CD8-positive, alpha-beta T cell (primary cell): ENCODE measurements at regions of chr7 and their contacts with region 1.

Region 1: GRCh38 chr7:115868373-115868772 is 162.2 kb downstream of the TFEC start:
- DNase-seq: no peak
- ATAC-seq: no peak
- H3K4me3 ChIP-seq: no peak overlapping the region
- H3K4me3 Mint-ChIP-seq: no peak overlapping the region
- H3K27ac ChIP-seq: no peak overlapping the region
- H3K27ac Mint-ChIP-seq: no peak overlapping the region
- H3K4me1 ChIP-seq: no peaks in the 10 kb centered on the region
- H3K4me1 Mint-ChIP-seq: no peaks in the 10 kb centered on the region
- H3K27me3 ChIP-seq: no peaks in the 10 kb centered on the region
- H3K27me3 Mint-ChIP-seq: no peaks in the 10 kb centered on the region
- CTCF ChIP-seq: no peak

Region 2: GRCh38 chr7:115879171-115879570 is 10.8 kb after region 1 on chr7:
- CTCF ChIA-PET with region 1: no interaction called
- POLR2A ChIA-PET with region 1: no interaction called
- intact Hi-C with region 1: loop called in 1 of 2 experiments (anchors 1 kb)
- DNase-seq: no peak
- ATAC-seq: no peak
- H3K4me3 ChIP-seq: no peak overlapping the region
- H3K4me3 Mint-ChIP-seq: no peak overlapping the region
- H3K27ac ChIP-seq: no peak overlapping the region
- H3K27ac Mint-ChIP-seq: no peak overlapping the region
- H3K4me1 ChIP-seq: no peaks in the 10 kb centered on the region
- H3K4me1 Mint-ChIP-seq: no peaks in the 10 kb centered on the region
- H3K27me3 ChIP-seq: no peaks in the 10 kb centered on the region
- H3K27me3 Mint-ChIP-seq: no peaks in the 10 kb centered on the region
- CTCF ChIP-seq: no peak

Region 3: GRCh38 chr7:117728890-117729624 is 1860.7 kb after region 1 on chr7:
- CTCF ChIA-PET with region 1: no interaction called
- POLR2A ChIA-PET with region 1: no interaction called
- intact Hi-C with region 1: loop called in 1 of 2 experiments (anchors 5 kb)
- DNase-seq: no peak
- ATAC-seq: no peak
- H3K4me3 ChIP-seq: no peak overlapping the region
- H3K4me3 Mint-ChIP-seq: no peak overlapping the region
- H3K27ac ChIP-seq: no peak overlapping the region
- H3K27ac Mint-ChIP-seq: no peak overlapping the region
- H3K4me1 ChIP-seq: no peaks in the 10 kb centered on the region
- H3K4me1 Mint-ChIP-seq: no peaks in the 10 kb centered on the region
- H3K27me3 ChIP-seq: no peaks in the 10 kb centered on the region
- H3K27me3 Mint-ChIP-seq: peaks cover 20% of the 10 kb centered on the region
- CTCF ChIP-seq: no peak